Calu3 (cell line): ENCODE measurements at regions of chr17 and their contacts with region 1.

Region 1: GRCh38 chr17:50397111-50397918 is at the start of gene LRRC59:
- DNase-seq: peak; percentile 98
- H3K4me3 Mint-ChIP-seq: peak within 1 kb of the TSS; percentile 87
- H3K27ac Mint-ChIP-seq: peak within 1 kb of the TSS; percentile 86
- H3K4me1 Mint-ChIP-seq: peaks cover 47% of the 10 kb centered on the region
- H3K27me3 Mint-ChIP-seq: no peaks in the 10 kb centered on the region
- CTCF ChIP-seq: peak; percentile 100
- total RNA-seq, gene LRRC59: 205 and 212 TPM in 2 replicates

Region 2: GRCh38 chr17:50361561-50362480 is 35.5 kb before region 1 on chr17:
- CTCF ChIA-PET with region 1: interaction called, 28 read pairs
- intact Hi-C with region 1: no loop called
- DNase-seq: peak; percentile 73
- H3K4me3 Mint-ChIP-seq: no peak overlapping the region
- H3K27ac Mint-ChIP-seq: no peak overlapping the region
- H3K4me1 Mint-ChIP-seq: no peaks in the 10 kb centered on the region
- H3K27me3 Mint-ChIP-seq: no peaks in the 10 kb centered on the region
- CTCF ChIP-seq: peak; percentile 90

Region 3: GRCh38 chr17:50380369-50381259 is 16.7 kb before region 1 on chr17:
- CTCF ChIA-PET with region 1: interaction called, 11 read pairs
- intact Hi-C with region 1: no loop called
- DNase-seq: no peak
- H3K4me3 Mint-ChIP-seq: no peak overlapping the region
- H3K27ac Mint-ChIP-seq: no peak overlapping the region
- H3K4me1 Mint-ChIP-seq: no peaks in the 10 kb centered on the region
- H3K27me3 Mint-ChIP-seq: no peaks in the 10 kb centered on the region
- CTCF ChIP-seq: no peak

Region 4: DNA sequence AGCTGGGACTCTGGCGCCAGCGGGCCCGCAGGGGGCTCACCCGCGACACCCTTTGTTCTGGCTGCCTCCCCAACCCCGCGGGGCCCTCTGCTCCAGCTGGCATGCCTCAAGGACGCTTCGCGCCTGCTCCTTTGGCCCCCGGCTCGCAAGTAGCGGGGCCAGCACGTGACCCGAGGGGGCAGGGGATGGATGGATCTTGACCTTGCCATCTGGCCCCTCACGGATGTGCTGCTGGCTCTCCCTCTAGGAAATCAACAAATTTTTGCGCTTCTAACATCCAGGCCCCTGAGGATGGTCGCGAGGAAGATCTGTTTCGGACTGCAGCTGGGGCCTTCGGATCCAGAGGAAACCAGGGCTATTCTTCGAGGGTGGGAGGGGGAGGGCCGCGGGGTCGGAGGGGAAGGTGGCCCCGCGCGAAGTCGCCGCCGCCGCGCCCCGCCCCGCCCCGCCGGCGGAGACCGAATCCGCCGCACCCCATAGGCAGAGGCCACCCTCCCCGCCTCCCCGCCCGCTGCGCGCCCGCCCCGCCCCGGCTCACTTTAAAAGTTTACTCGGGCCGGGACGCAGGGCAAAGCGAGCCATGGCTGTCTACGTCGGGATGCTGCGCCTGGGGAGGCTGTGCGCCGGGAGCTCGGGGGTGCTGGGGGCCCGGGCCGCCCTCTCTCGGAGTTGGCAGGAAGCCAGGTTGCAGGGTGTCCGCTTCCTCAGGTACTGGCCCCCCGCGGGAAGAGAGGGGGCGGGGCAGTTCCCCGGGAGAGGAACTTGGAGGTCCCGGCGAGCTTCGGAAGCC is 28.6 kb after region 1 on chr17 and contains the start of gene ACSF2:
- CTCF ChIA-PET with region 1: interaction called, 36 read pairs
- intact Hi-C with region 1: loop called (anchors 1 kb)
- DNase-seq: peak; percentile 87
- H3K4me3 Mint-ChIP-seq: peak within 1 kb of the TSS; percentile 87
- H3K27ac Mint-ChIP-seq: peak within 1 kb of the TSS; percentile 88
- H3K4me1 Mint-ChIP-seq: peaks cover 73% of the 10 kb centered on the region
- H3K27me3 Mint-ChIP-seq: no peaks in the 10 kb centered on the region
- CTCF ChIP-seq: no peak
- total RNA-seq, gene ACSF2: 148 and 156 TPM in 2 replicates

Region 5: DNA sequence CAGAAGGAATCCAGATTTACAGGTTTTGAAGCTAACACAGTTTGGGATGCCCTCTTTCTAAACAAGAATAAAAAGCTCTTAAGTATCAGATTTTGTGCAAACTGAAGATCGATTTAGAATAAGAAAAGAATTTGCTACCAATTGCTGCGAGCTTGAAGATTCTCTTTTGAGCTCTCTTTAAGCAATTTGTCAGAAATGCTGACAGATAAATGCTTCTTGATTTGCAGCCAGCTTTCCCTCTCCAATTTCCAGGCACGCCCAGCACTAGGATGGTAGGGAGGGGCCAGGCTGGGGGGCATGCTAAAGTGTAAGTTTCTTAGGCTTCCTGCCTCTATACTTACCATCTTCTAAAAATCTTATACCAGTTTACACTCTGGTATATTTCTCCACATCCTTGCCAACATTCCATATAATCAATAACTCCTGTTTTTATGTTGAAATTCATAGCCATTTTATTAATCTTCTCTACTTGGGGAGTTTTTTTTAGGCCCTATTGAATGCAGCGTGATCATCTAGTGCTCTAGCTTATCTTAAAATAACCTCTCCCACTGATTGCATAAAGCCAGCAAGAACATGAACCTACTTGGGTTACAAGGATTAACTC is 46.2 kb after region 1 on chr17:
- CTCF ChIA-PET with region 1: interaction called, 11 read pairs
- intact Hi-C with region 1: loop called (anchors 5 kb)
- DNase-seq: no peak
- H3K4me3 Mint-ChIP-seq: peak overlapping the region; percentile 20
- H3K27ac Mint-ChIP-seq: peak overlapping the region; percentile 62
- H3K4me1 Mint-ChIP-seq: peaks cover 52% of the 10 kb centered on the region
- H3K27me3 Mint-ChIP-seq: no peaks in the 10 kb centered on the region
- CTCF ChIP-seq: no peak

Region 6: GRCh38 chr17:50465171-50465570 is 67.9 kb after region 1 on chr17:
- CTCF ChIA-PET with region 1: no interaction called
- intact Hi-C with region 1: no loop called
- DNase-seq: no peak
- H3K4me3 Mint-ChIP-seq: no peak overlapping the region
- H3K27ac Mint-ChIP-seq: peak overlapping the region; percentile 25
- H3K4me1 Mint-ChIP-seq: peaks cover 9% of the 10 kb centered on the region
- H3K27me3 Mint-ChIP-seq: no peaks in the 10 kb centered on the region
- CTCF ChIP-seq: no peak